B cell (primary cell): ENCODE measurements at regions of chr19 and their contacts with region 1.

Region 1: GRCh38 chr19:10644260-10645007 is 9.7 kb upstream of the ILF3 start:
- DNase-seq: peak; percentile 87
- ATAC-seq: peak; percentile 79
- H3K4me3 ChIP-seq: no peak overlapping the region
- H3K4me3 Mint-ChIP-seq: no peak overlapping the region
- H3K27ac ChIP-seq: peak overlapping the region; percentile 30 to 69
- H3K27ac Mint-ChIP-seq: peak overlapping the region; percentile 86
- H3K4me1 ChIP-seq: peaks cover 7 to 16% of the 10 kb centered on the region in 2 donors
- H3K4me1 Mint-ChIP-seq: peaks cover 26% of the 10 kb centered on the region
- H3K27me3 ChIP-seq: no peaks in the 10 kb centered on the region
- H3K27me3 Mint-ChIP-seq: no peaks in the 10 kb centered on the region
- CTCF ChIP-seq: peak; percentile 90

Region 2: GRCh38 chr19:10517760-10518443 is 126.5 kb before region 1 on chr19:
- CTCF ChIA-PET with region 1: interaction called, 6 read pairs
- POLR2A ChIA-PET with region 1: interaction called, 14 read pairs
- intact Hi-C with region 1: no loop called
- DNase-seq: peak; percentile 42
- ATAC-seq: peak; percentile 28
- H3K4me3 ChIP-seq: peak overlapping the region in 1 of 5 experiments; percentile 14
- H3K4me3 Mint-ChIP-seq: peak overlapping the region; percentile 40
- H3K27ac ChIP-seq: no peak overlapping the region
- H3K27ac Mint-ChIP-seq: no peak overlapping the region
- H3K4me1 ChIP-seq: peaks cover 34 to 39% of the 10 kb centered on the region in 2 donors
- H3K4me1 Mint-ChIP-seq: peaks cover 36% of the 10 kb centered on the region
- H3K27me3 ChIP-seq: peaks cover 2 to 78% (median 43%) of the 10 kb centered on the region in 4 experiments
- H3K27me3 Mint-ChIP-seq: peaks cover 51% of the 10 kb centered on the region
- CTCF ChIP-seq: no peak

Region 3: GRCh38 chr19:10551698-10552301 is 92.6 kb before region 1 on chr19:
- CTCF ChIA-PET with region 1: interaction called, 14 read pairs
- POLR2A ChIA-PET with region 1: interaction called, 4 read pairs
- intact Hi-C with region 1: no loop called
- DNase-seq: no peak
- ATAC-seq: no peak
- H3K4me3 ChIP-seq: no peak overlapping the region
- H3K4me3 Mint-ChIP-seq: no peak overlapping the region
- H3K27ac ChIP-seq: peak overlapping the region in 1 of 2 donors; percentile 81
- H3K27ac Mint-ChIP-seq: peak overlapping the region; percentile 78
- H3K4me1 ChIP-seq: peaks cover 37 to 44% of the 10 kb centered on the region in 2 donors
- H3K4me1 Mint-ChIP-seq: peaks cover 34% of the 10 kb centered on the region
- H3K27me3 ChIP-seq: no peaks in the 10 kb centered on the region
- H3K27me3 Mint-ChIP-seq: no peaks in the 10 kb centered on the region
- CTCF ChIP-seq: no peak

Region 4: DNA sequence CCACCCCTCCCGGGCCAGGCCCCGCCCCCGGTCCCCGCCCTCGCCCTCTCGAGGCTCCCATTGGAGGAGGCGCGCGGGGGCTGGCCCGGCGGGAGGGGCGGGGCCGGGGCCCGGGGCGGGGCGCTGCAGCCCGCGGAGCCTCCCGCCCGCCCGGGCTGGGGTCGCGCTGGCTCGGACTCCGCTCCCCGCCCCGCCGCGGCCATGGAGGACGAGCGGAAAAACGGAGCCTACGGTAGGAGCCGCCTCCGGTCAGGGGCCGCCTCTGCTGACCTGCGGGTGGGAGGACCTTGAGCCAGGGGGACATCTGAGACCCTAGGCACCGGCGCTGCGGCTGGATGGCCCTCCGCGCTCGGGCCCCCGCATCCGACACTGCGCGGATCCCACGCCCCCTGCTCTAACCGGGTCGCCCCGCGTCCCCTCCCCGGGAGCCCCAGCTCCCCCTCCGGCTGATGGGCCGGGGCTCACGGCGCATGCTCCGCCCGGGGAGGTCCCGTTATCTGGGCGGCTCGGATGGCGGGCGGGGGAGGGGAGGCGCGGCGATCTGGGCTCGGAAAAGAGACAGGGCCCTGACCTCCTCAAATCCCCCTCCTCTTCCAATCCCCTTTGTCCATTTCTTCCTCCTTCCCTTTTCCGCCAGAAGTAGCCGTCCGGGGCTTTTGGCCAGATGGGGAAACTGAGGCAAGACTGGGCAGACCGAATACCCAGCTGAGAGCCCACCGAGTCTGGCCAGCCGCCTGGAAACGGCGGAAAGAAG is 41.9 kb before region 1 on chr19:
- CTCF ChIA-PET with region 1: interaction called, 81 read pairs
- POLR2A ChIA-PET with region 1: interaction called, 24 read pairs
- intact Hi-C with region 1: loop called (anchors 1 kb)
- DNase-seq: peak; percentile 86
- ATAC-seq: peak; percentile 73
- H3K4me3 ChIP-seq: peak overlapping the region; percentile 89 to 100 (median 94)
- H3K4me3 Mint-ChIP-seq: peak overlapping the region; percentile 96
- H3K27ac ChIP-seq: peak overlapping the region; percentile 97 to 99
- H3K27ac Mint-ChIP-seq: peak overlapping the region; percentile 99
- H3K4me1 ChIP-seq: peaks cover 30 to 47% of the 10 kb centered on the region in 2 donors
- H3K4me1 Mint-ChIP-seq: peaks cover 37% of the 10 kb centered on the region
- H3K27me3 ChIP-seq: no peaks in the 10 kb centered on the region
- H3K27me3 Mint-ChIP-seq: no peaks in the 10 kb centered on the region
- CTCF ChIP-seq: no peak

Region 5: GRCh38 chr19:10695401-10696398 is 51.3 kb after region 1 on chr19:
- CTCF ChIA-PET with region 1: interaction called, 53 read pairs
- POLR2A ChIA-PET with region 1: interaction called, 10 read pairs
- intact Hi-C with region 1: no loop called
- DNase-seq: peak; percentile 90
- ATAC-seq: peak; percentile 98
- H3K4me3 ChIP-seq: peak overlapping the region; percentile 6 to 54 (median 25)
- H3K4me3 Mint-ChIP-seq: peak overlapping the region; percentile 80
- H3K27ac ChIP-seq: no peak overlapping the region
- H3K27ac Mint-ChIP-seq: peak overlapping the region; percentile 67
- H3K4me1 ChIP-seq: peaks cover 10 to 15% of the 10 kb centered on the region in 2 donors
- H3K4me1 Mint-ChIP-seq: peaks cover 17% of the 10 kb centered on the region
- H3K27me3 ChIP-seq: no peaks in the 10 kb centered on the region
- H3K27me3 Mint-ChIP-seq: no peaks in the 10 kb centered on the region
- CTCF ChIP-seq: no peak